GM10248 (cell line): ENCODE measurements at regions of chr9 and their contacts with region 1.

Region 1: DNA sequence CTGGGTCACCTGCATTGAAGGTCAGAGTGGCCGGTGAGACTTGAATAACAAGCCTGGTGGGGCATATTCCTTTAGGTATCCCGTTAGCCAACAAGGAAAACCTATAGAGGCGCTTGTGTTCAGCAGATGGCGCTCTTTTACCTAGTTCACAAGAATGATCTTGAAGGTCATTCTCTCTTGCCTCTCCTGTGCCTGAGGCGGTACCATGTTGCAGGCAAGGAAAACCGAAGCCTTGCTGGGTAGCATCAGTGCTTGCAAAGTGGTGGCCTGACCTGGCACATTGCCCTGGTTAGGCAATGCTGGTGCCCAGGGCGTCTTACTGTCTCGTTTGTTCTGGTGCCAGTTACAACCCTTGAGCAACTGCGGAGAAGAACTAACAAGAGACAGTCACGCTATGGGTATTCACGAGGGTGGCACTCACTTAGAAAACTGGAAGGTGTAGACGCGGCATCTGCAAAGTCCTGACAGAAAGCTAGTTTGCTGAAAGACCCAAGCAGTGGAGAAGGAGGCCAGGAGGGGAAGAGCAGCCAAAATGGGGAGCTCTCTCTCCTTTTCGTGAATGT is 56.7 kb downstream of the AOPEP start:
- DNase-seq: peak; percentile 44
- CTCF ChIP-seq: peak; percentile 56

Region 2: DNA sequence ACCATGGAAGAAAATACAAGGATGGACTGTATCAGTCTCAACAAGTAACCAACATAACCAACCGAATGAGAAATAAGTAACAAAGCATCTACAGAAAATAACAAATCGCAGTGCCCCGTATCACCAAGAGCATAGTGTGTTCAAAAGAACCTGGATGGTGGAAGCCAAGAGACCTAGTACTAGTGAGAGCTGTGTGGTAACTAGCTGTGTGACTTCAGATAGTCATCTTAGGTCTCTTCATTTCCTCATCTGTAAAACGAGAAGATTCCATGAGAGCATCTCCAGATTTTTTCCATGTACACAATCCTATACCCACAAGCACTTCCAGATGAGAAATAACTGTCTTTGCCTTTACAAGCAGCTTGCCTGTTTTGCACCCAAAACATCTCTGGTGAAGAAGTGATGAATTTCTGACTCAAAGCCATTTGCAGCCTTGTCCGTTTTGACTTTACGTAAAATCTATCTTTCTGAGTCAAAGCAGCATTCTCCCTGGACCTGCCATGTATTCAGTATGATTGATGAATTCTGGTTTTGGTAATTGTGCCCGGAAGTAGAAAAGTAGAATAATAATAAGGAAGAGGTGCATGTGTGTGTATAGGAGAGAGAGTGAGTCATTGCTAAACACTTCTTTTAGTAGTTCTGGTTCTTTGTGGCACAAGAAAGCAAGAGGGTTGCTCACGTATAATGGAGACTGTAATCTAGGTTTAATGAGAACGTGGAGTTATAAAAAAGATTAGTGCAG is 15.7 kb before region 1 on chr9:
- CTCF ChIA-PET with region 1: interaction called, 23 read pairs
- POLR2A ChIA-PET with region 1: no interaction called
- DNase-seq: no peak
- CTCF ChIP-seq: no peak

Region 3: GRCh38 chr9:94772639-94773303 is 10.4 kb before region 1 on chr9:
- CTCF ChIA-PET with region 1: interaction called, 23 read pairs
- POLR2A ChIA-PET with region 1: no interaction called
- DNase-seq: no peak
- CTCF ChIP-seq: no peak

Region 4: GRCh38 chr9:94802793-94803192 is 19.6 kb after region 1 on chr9:
- CTCF ChIA-PET with region 1: interaction called, 13 read pairs
- POLR2A ChIA-PET with region 1: no interaction called
- DNase-seq: peak; percentile 53
- CTCF ChIP-seq: no peak

Region 5: GRCh38 chr9:94812343-94812742 is 29.2 kb after region 1 on chr9:
- CTCF ChIA-PET with region 1: interaction called, 14 read pairs
- POLR2A ChIA-PET with region 1: no interaction called
- DNase-seq: no peak
- CTCF ChIP-seq: no peak

Region 6: DNA sequence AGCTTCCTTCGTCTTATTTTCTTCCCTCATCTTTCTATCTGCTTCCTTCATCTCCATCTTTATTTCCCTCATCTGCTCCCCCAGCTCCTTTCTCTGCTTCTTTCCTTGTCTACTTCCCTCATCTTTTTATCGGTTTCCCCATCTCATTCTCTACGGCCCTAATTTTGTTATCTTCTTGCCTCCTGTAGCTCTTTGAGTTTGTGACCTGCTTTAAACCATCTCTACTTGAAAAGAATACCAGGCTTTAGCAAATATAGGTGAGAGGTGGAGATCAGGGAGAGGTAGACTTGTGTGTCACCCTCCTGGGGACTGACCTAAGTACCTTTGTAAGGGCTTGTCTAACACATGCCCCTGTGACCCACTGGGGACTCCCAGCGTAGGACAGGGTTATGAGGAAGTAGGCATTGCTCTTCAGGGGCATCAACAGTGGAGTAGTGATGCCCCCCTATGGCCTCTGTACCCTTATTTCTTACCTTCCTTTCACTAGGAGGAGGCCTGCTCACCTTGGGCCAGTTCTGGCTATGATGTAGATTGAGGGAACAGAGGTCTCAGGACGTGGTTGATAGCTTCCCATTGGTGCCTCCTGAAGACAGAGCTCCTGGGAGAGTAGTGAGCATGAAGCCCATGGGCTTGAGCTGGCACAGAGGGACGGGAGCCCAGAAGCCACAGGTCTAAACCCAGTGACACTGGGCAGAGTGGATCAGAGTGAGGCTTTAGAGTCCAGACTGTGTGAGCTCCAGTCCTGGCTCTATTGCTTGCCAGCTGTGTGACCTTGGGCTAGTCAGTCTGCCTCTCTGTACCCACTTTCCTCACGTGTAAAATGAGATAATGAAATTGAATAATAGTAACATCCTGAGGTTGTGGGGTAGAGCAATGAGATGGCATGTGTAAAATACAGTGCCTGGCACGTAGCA is 134.9 kb after region 1 on chr9:
- CTCF ChIA-PET with region 1: interaction called, 50 read pairs
- POLR2A ChIA-PET with region 1: no interaction called
- DNase-seq: peak; percentile 61
- CTCF ChIP-seq: no peak